Posterior vena cava (tissue), 2 donors: ENCODE measurements at regions of chr3 and their contacts with region 1.

Region 1: GRCh38 chr3:193693774-193694173 is 100.8 kb downstream of the OPA1 start:
- DNase-seq: no peak

Region 2: DNA sequence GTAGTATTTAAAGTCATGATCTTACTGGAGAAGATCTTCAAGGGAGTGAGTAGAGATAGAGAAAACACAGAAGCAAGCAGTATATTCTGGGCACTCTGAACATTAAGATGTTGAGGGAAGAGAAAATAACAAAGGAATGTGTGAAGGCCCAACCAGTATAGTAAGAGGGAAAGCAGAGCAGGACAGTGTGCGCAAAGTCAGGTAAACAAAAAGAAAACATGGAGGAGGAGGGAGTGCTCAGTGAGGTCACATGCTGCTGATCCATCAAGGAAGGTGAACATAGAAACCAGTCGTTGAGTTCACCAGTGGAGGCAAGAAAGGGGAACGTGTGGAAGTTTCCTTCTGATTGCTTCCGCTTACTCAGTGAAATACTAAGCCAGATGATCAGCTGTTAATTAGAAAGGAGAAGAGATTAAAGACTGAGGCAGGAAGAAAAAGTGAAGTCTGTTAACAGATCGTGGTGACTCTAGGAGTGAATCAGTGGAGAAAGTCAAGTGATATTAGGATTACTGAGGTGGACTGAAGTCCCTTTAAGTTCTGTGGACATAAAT is 53.5 kb before region 1 on chr3:
- intact Hi-C with region 1: no loop called
- DNase-seq: no peak

Region 3: DNA sequence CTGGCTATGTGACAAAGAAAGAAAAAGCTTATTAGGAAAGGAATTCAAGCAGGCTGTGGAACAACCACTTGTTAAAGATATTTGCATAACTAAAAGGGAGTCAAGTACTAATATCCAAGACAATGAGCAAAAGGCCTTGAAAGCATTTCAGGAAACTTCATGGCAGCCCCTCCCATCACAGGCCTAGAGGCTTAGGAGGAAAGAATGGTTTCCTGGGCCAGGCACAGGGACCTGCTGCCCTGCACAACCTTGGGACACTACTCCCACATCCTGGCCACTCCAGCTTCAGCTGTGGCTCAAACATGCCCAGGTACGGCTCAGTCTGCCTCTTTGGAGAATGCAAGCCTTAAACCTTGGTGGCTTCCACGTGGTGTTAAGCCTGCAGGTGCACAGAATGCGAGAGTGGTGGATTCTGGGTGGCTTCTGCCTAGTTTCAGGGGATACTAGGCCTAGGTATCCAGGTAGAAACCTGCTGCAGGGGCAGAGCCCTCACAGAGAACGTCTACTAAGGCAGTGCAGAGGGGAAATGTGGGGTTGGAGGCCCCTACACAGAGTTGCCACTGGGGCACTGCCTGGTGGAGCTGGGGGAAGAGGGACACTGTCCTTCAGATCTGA is 20.9 kb after region 1 on chr3:
- intact Hi-C with region 1: loop called in 1 of 2 experiments (anchors 2 kb)
- DNase-seq: no peak

Region 4: DNA sequence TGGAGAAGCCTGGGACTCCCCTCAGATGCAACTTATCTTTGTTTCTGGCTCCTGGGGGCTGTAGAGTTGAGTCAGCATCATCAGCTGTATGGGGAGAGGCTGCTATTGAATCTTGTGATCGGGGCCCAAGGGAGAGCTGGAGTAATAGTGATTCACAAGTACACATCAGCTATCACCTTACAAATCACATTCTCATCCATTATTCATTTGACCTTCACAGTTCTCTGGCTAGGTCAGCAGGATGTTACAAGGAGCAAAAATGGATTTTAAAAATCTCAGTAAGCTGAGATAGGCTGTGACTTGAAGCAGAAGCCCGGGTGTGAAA is 74.3 kb after region 1 on chr3:
- intact Hi-C with region 1: no loop called
- DNase-seq: no peak

Region 5: DNA sequence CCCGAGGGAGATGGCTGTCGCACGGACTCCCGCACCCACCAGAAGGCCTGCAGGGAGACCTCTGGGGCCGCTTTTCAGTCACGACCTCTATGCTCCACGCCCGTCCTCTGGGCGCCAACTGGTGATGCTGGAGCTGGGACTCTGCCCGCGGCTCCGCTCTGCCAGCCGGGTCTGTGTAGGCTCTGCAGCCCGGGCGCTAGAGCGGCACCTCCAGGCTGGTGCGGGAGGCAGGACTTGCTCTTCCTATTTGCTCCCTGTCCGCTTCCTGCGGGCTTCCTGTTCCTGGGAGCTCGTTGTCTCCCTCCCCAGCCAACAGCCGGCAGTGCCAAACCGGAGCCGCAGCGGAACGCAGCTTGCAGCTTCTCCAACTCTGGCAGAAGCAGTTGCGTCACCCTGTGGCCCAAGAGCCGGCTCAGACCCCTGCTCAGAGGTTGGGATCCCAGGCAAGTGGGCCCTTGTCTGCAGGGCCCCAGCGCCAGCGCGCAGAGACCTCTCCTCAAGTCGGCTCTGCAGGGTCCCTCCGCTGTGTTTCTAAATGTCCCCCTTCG is 1291.3 kb after region 1 on chr3:
- intact Hi-C with region 1: no loop called
- DNase-seq: peak; percentile 93